Prostate gland (tissue), 2 donors: ENCODE measurements at regions of chr3 and their contacts with region 1.

Region 1: GRCh38 chr3:123819949-123820348 is 64.2 kb downstream of the MYLK start:
- DNase-seq: no peak
- H3K4me3 ChIP-seq: no peak overlapping the region
- H3K27ac ChIP-seq: no peak overlapping the region
- H3K4me1 ChIP-seq: no peaks in the 10 kb centered on the region
- H3K27me3 ChIP-seq: no peaks in the 10 kb centered on the region
- CTCF ChIP-seq: no peak
- POLR2A ChIP-seq: no peak

Region 2: GRCh38 chr3:123861044-123861836 is 41.3 kb after region 1 on chr3:
- intact Hi-C with region 1: loop called (anchors 5 kb)
- DNase-seq: no peak
- H3K4me3 ChIP-seq: no peak overlapping the region
- H3K27ac ChIP-seq: no peak overlapping the region
- H3K4me1 ChIP-seq: no peaks in the 10 kb centered on the region
- H3K27me3 ChIP-seq: no peaks in the 10 kb centered on the region
- CTCF ChIP-seq: no peak
- POLR2A ChIP-seq: no peak